AG04449 (cell line): ENCODE measurements at regions of chr20 and their contacts with region 1.

Region 1: DNA sequence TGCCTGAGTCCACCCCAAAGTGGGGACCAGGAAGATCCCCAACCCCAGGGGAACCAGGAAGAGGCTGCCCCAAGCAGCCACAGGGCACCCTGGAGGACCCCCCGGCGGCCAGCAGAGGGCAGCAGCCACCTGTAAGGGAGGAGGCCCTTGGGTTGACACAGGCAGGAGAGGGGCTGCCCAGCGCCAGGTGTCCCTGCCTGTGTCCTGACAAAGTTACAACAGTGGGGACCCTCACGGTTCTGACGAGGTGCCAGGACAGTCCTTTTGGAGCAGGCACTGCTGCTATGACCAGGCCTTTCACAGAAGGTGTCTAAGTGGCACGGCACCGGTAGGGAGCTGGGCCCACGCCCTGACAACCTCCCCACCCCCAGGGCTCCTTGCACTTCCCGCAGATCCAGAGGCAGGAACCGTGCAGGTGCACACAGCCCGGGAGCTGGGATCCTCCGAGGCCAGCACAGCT is 176.7 kb downstream of the BMP7 start:
- DNase-seq: no peak
- H3K4me3 ChIP-seq: no peak overlapping the region
- CTCF ChIP-seq: peak; percentile 92

Region 2: DNA sequence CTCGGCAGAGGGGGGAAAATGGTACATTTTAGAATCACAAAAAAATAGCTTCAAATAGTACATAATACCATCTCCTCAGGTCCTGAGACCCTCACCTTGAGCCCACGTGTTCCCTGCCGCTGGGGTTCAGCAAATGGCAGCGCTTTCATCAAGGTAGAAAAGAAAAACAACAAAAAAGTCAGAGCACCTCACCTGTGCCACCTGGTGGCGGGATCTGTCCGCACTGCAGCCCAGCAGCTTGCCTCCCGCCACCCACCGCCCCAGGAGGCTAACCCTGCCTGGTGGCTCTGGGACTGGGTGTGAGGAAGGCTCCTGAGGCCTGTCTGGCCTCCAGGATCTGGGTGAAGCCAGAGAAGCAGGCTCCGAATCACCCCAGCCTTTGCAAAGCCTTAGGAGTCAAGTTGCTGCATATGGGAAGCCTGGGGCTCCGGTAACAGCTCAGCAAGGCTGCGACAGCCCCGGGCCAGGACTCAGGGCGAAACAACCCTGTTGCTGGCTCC is 94.1 kb before region 1 on chr20:
- CTCF ChIA-PET with region 1: no interaction called
- POLR2A ChIA-PET with region 1: no interaction called
- DNase-seq: no peak
- H3K4me3 ChIP-seq: no peak overlapping the region
- CTCF ChIP-seq: peak; percentile 57

Region 3: GRCh38 chr20:57102566-57103451 is 13.1 kb after region 1 on chr20:
- CTCF ChIA-PET with region 1: interaction called, 14 read pairs
- POLR2A ChIA-PET with region 1: no interaction called
- DNase-seq: no peak
- H3K4me3 ChIP-seq: no peak overlapping the region
- CTCF ChIP-seq: no peak

Region 4: DNA sequence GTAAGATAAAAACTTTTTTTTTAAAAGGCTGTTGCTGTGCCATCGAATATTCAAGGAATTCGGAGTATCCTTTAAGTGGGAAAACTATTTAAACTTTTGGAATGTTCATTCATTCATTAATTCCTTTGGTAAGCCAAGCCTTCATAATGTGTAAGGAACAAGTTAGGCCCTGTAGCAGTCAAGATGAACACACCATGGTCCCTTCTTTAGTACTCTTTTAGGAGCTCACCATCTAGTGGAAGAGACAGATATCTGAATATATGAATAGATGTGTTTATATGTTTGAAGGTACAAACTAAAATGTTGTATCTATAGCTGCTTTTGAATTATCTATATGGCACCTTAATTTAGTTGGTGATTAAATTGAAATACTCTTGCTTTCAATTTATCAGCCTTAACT is 245.7 kb after region 1 on chr20:
- CTCF ChIA-PET with region 1: interaction called, 42 read pairs
- POLR2A ChIA-PET with region 1: no interaction called
- DNase-seq: no peak
- H3K4me3 ChIP-seq: no peak overlapping the region
- CTCF ChIP-seq: no peak